Lower leg skin (tissue), 4 donors: ENCODE measurements at regions of chr2 and their contacts with region 1.

Region 1: GRCh38 chr2:118855451-118856279 is 8.2 kb upstream of the EN1 start:
- DNase-seq: peak; percentile 71 to 97
- H3K4me3 ChIP-seq: no peak overlapping the region
- CTCF ChIP-seq: peak in 1 of 3 donors; percentile 88
- POLR2A ChIP-seq: no peak

Region 2: DNA sequence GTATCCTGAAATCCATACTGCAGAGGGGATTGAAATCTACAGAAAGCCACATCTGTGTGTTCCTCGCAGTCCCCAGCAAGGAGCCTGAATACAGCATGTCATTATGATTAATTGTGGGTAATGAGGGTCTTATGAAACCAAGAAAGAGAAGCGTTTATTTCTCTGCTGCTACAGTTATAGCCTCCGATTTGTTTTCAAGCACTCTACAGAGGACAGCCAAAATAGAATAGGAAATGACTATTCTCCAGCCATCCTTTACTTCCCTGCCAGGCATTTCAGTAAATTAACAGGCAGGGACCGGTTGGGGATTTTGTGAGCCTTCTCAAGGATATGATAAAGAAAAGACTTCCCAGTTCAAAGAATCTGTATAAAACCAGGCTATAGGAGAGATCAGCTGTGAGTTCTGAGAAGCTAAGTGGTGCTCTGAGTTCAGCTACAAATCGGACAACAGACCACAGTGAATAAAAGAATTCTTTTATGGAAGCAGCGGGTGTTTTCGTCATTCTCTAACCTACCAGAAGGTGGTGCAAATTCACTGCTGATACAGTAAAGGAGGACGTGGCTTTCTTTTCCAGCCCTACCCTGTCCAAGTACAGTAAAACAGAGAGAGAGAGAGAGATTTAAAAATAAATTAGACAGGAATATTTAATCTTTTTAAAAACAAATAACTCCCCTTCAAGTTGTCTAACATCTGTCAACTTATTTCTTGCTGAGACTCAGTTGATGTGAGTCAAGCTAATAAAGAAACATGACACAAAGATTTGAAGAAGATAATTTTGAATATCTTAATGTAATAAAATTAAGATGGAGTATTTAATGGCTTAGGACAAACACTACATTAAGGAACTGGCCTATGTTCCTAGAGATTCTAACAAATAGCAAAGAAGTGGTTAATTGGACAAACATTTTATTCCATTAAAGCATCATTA is 633.7 kb before region 1 on chr2:
- intact Hi-C with region 1: loop called (anchors 5 kb)
- DNase-seq: peak in 1 of 2 donors; percentile 56
- H3K4me3 ChIP-seq: no peak overlapping the region
- CTCF ChIP-seq: no peak
- POLR2A ChIP-seq: no peak

Region 3: DNA sequence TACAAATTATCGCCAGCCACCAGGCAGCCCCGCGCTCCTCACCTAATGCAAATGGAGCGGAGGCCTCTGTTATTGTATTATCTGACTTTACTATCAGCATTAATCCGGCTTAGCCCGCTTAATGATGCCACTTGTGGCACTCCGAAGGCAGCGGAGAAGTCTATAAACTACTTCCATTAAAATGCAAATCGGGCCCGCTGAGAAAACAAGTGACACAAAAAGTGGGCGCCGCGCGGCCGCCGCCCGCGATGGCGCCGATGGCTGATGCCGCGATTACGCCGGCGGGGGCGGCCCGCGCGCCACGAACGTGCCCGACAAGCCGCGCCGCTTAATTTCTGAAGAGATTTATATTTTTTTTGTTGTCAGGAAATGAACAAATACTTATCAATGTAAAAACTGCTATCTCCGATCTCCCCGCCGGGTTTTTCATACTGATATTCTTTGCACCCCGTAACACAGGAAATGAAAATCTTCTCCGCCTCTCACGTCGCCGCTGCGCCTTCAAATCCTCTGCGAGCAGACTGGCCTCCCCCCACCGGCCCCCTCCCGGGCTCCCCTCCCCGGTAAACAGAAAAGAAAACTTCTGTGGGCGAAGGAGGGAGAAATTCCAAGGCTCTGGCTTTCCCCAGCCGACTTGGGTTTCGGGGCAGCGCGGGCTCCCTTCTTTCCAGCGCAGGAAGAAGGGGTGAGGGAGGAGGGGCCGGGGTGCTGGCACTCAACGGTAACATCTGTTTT is 545.6 kb before region 1 on chr2:
- intact Hi-C with region 1: loop called (anchors 5 kb)
- DNase-seq: peak in 1 of 2 donors; percentile 91
- H3K4me3 ChIP-seq: peak overlapping the region; percentile 51
- CTCF ChIP-seq: no peak
- POLR2A ChIP-seq: no peak

Region 4: GRCh38 chr2:118371515-118371914 is 484.1 kb before region 1 on chr2:
- intact Hi-C with region 1: loop called (anchors 10 kb)
- DNase-seq: no peak
- H3K4me3 ChIP-seq: no peak overlapping the region
- CTCF ChIP-seq: no peak
- POLR2A ChIP-seq: no peak

Region 5: GRCh38 chr2:118548880-118549488 is 306.7 kb before region 1 on chr2:
- intact Hi-C with region 1: loop called (anchors 10 kb)
- DNase-seq: no peak
- H3K4me3 ChIP-seq: no peak overlapping the region
- CTCF ChIP-seq: no peak
- POLR2A ChIP-seq: no peak